Naive thymus-derived CD4-positive, alpha-beta T cell (primary cell): ENCODE measurements at regions of chr12 and their contacts with region 1.

Region 1: GRCh38 chr12:123580772-123581171 is 3.6 kb upstream of the TMED2 start:
- DNase-seq: no peak
- ATAC-seq: no peak
- H3K4me3 ChIP-seq: no peak overlapping the region
- H3K4me3 Mint-ChIP-seq: no peak overlapping the region
- H3K27ac ChIP-seq: no peak overlapping the region
- H3K27ac Mint-ChIP-seq: peak overlapping the region in 4 of 9 donors; percentile 5 to 95 (median 44)
- H3K4me1 ChIP-seq: peaks cover 17 to 21% of the 10 kb centered on the region in 2 donors
- H3K4me1 Mint-ChIP-seq: peaks cover 20 to 30% (median 26%) of the 10 kb centered on the region in 7 donors
- H3K27me3 ChIP-seq: no peaks in the 10 kb centered on the region
- H3K27me3 Mint-ChIP-seq: no peaks in the 10 kb centered on the region

Region 2: GRCh38 chr12:122974274-122974891 is 606.4 kb before region 1 on chr12:
- CTCF ChIA-PET with region 1: no interaction called
- POLR2A ChIA-PET with region 1: no interaction called
- intact Hi-C with region 1: loop called (anchors 1 to 5 kb)
- DNase-seq: peak; percentile 92 to 98 (median 98)
- ATAC-seq: peak; percentile 92
- H3K4me3 ChIP-seq: peak overlapping the region; percentile 100
- H3K4me3 Mint-ChIP-seq: peak overlapping the region; percentile 92 to 99 (median 97)
- H3K27ac ChIP-seq: peak overlapping the region; percentile 98
- H3K27ac Mint-ChIP-seq: peak overlapping the region; percentile 99 to 100 (median 99)
- H3K4me1 ChIP-seq: peaks cover 18 to 23% of the 10 kb centered on the region in 2 donors
- H3K4me1 Mint-ChIP-seq: peaks cover 17 to 39% (median 30%) of the 10 kb centered on the region in 7 donors
- H3K27me3 ChIP-seq: no peaks in the 10 kb centered on the region
- H3K27me3 Mint-ChIP-seq: peaks cover 0 to 3% (median 0%) of the 10 kb centered on the region in 5 donors

Region 3: GRCh38 chr12:123271001-123271729 is 309.6 kb before region 1 on chr12:
- CTCF ChIA-PET with region 1: interaction called, 8 read pairs
- POLR2A ChIA-PET with region 1: interaction called, 5 read pairs
- intact Hi-C with region 1: loop called (anchors 1 kb)
- DNase-seq: peak; percentile 55 to 84 (median 68)
- ATAC-seq: peak; percentile 88
- H3K4me3 ChIP-seq: no peak overlapping the region
- H3K4me3 Mint-ChIP-seq: peak overlapping the region in 1 of 10 donors; percentile 87
- H3K27ac ChIP-seq: no peak overlapping the region
- H3K27ac Mint-ChIP-seq: no peak overlapping the region
- H3K4me1 ChIP-seq: peaks cover 12 to 18% of the 10 kb centered on the region in 2 donors
- H3K4me1 Mint-ChIP-seq: peaks cover 7 to 30% (median 20%) of the 10 kb centered on the region in 7 donors
- H3K27me3 ChIP-seq: no peaks in the 10 kb centered on the region
- H3K27me3 Mint-ChIP-seq: no peaks in the 10 kb centered on the region

Region 4: GRCh38 chr12:123436017-123436964 is 144.5 kb before region 1 on chr12 and contains the start of gene RILPL2:
- CTCF ChIA-PET with region 1: interaction called, 5 read pairs
- POLR2A ChIA-PET with region 1: no interaction called
- intact Hi-C with region 1: loop called (anchors 1 kb)
- DNase-seq: peak; percentile 79 to 96 (median 88)
- ATAC-seq: peak; percentile 91
- H3K4me3 ChIP-seq: peak within 1 kb of the TSS; percentile 96
- H3K4me3 Mint-ChIP-seq: peak within 1 kb of the TSS; percentile 85 to 97 (median 93)
- H3K27ac ChIP-seq: peak within 1 kb of the TSS; percentile 88
- H3K27ac Mint-ChIP-seq: peak within 1 kb of the TSS; percentile 77 to 96 (median 88)
- H3K4me1 ChIP-seq: peaks cover 11 to 29% of the 10 kb centered on the region in 2 donors
- H3K4me1 Mint-ChIP-seq: peaks cover 24 to 47% (median 33%) of the 10 kb centered on the region in 7 donors
- H3K27me3 ChIP-seq: no peaks in the 10 kb centered on the region
- H3K27me3 Mint-ChIP-seq: no peaks in the 10 kb centered on the region
- total RNA-seq, gene RILPL2: 4.3 to 12.8 (median 5.6) TPM

Region 5: GRCh38 chr12:123533672-123534643 is 46.8 kb before region 1 on chr12 and contains the start of gene RILPL1:
- CTCF ChIA-PET with region 1: no interaction called
- POLR2A ChIA-PET with region 1: interaction called, 4 read pairs
- intact Hi-C with region 1: loop called (anchors 1 to 2 kb)
- DNase-seq: peak; percentile 16 to 70 (median 47)
- ATAC-seq: peak; percentile 86
- H3K4me3 ChIP-seq: peak within 1 kb of the TSS; percentile 65
- H3K4me3 Mint-ChIP-seq: peak within 1 kb of the TSS; percentile 83 to 91 (median 88)
- H3K27ac ChIP-seq: peak within 1 kb of the TSS; percentile 61
- H3K27ac Mint-ChIP-seq: peak within 1 kb of the TSS; percentile 60 to 95 (median 79)
- H3K4me1 ChIP-seq: peaks cover 11 to 18% of the 10 kb centered on the region in 2 donors
- H3K4me1 Mint-ChIP-seq: peaks cover 11 to 25% (median 16%) of the 10 kb centered on the region in 7 donors
- H3K27me3 ChIP-seq: no peaks in the 10 kb centered on the region
- H3K27me3 Mint-ChIP-seq: peaks cover 0 to 22% (median 0%) of the 10 kb centered on the region in 5 donors
- total RNA-seq, gene RILPL1: 1.5 to 9.2 (median 3.9) TPM

Region 6: GRCh38 chr12:123614531-123614930 is 33.8 kb after region 1 on chr12:
- CTCF ChIA-PET with region 1: no interaction called
- POLR2A ChIA-PET with region 1: no interaction called
- intact Hi-C with region 1: loop called in 1 of 2 experiments (anchors 5 kb)
- DNase-seq: no peak
- ATAC-seq: no peak
- H3K4me3 ChIP-seq: no peak overlapping the region
- H3K4me3 Mint-ChIP-seq: no peak overlapping the region
- H3K27ac ChIP-seq: no peak overlapping the region
- H3K27ac Mint-ChIP-seq: peak overlapping the region in 1 of 9 donors; percentile 36
- H3K4me1 ChIP-seq: peaks cover 0 to 4% of the 10 kb centered on the region in 2 donors
- H3K4me1 Mint-ChIP-seq: peaks cover 0 to 10% (median 4%) of the 10 kb centered on the region in 7 donors
- H3K27me3 ChIP-seq: no peaks in the 10 kb centered on the region
- H3K27me3 Mint-ChIP-seq: no peaks in the 10 kb centered on the region

Region 7: GRCh38 chr12:123713398-123713797 is 132.6 kb after region 1 on chr12:
- CTCF ChIA-PET with region 1: interaction called, 3 read pairs
- POLR2A ChIA-PET with region 1: no interaction called
- intact Hi-C with region 1: loop called (anchors 1 kb)
- DNase-seq: peak in 2 of 9 donors; percentile 7 to 41
- ATAC-seq: no peak
- H3K4me3 ChIP-seq: peak overlapping the region; percentile 95
- H3K4me3 Mint-ChIP-seq: peak overlapping the region; percentile 81 to 100 (median 90)
- H3K27ac ChIP-seq: peak overlapping the region; percentile 77
- H3K27ac Mint-ChIP-seq: peak overlapping the region; percentile 37 to 93 (median 79)
- H3K4me1 ChIP-seq: peaks cover 11 to 21% of the 10 kb centered on the region in 2 donors
- H3K4me1 Mint-ChIP-seq: peaks cover 28 to 42% (median 38%) of the 10 kb centered on the region in 7 donors
- H3K27me3 ChIP-seq: no peaks in the 10 kb centered on the region
- H3K27me3 Mint-ChIP-seq: no peaks in the 10 kb centered on the region

Region 8: GRCh38 chr12:123938679-123939480 is 358.1 kb after region 1 on chr12:
- CTCF ChIA-PET with region 1: no interaction called
- POLR2A ChIA-PET with region 1: no interaction called
- intact Hi-C with region 1: no loop called
- DNase-seq: peak in 1 of 9 donors; percentile 3
- ATAC-seq: no peak
- H3K4me3 ChIP-seq: peak overlapping the region; percentile 13
- H3K4me3 Mint-ChIP-seq: peak overlapping the region; percentile 76 to 90 (median 84)
- H3K27ac ChIP-seq: peak overlapping the region; percentile 68
- H3K27ac Mint-ChIP-seq: peak overlapping the region; percentile 85 to 98 (median 92)
- H3K4me1 ChIP-seq: peaks cover 14 to 18% of the 10 kb centered on the region in 2 donors
- H3K4me1 Mint-ChIP-seq: peaks cover 26 to 38% (median 30%) of the 10 kb centered on the region in 7 donors
- H3K27me3 ChIP-seq: no peaks in the 10 kb centered on the region
- H3K27me3 Mint-ChIP-seq: no peaks in the 10 kb centered on the region